ENCODE measurements at regions of chr17 and their contacts with region 1.

Region 1: DNA sequence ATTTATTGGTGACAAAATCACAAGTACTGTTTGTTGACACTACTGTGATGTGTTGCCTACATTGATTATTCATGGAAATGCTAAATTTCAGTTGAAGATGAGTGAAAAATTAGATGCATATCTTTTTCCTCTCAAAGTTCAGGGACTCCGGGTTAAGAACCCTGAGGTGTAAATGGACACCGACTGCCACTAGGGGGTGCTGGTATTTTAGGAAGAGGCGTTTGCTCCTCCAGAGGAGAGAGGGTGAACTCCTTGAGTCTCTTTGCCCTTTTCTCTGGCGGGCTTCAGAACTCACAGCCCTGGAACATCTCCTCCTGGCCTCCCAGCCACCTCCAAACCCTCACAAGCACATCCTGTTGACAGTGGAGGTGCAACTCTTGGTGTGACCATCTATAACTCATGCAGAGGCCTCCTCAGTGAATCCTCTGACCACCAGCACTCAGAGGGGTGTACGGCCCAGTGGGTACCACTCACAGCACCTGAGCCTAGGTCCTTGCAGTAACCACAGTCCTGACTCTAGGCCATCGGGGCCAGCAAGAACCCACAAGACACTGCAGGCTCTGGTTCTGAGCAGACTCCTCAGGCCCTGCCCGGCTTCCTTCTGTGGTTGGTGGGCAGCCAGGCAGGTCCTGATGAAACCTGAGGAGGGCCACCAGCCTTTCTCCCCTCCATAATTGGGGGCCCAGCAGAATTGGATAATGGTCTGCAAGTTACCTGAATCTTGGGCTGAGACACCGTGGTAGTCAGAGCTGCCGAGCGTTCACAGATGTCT is 26.2 kb upstream of the PIK3R5 start:
- DNase-seq: peak; percentile 63
- H3K4me3 ChIP-seq: no peak overlapping the region
- H3K27ac ChIP-seq: no peak overlapping the region
- H3K4me1 ChIP-seq: no peaks in the 10 kb centered on the region
- CTCF ChIP-seq: peak; percentile 85

Region 2: DNA sequence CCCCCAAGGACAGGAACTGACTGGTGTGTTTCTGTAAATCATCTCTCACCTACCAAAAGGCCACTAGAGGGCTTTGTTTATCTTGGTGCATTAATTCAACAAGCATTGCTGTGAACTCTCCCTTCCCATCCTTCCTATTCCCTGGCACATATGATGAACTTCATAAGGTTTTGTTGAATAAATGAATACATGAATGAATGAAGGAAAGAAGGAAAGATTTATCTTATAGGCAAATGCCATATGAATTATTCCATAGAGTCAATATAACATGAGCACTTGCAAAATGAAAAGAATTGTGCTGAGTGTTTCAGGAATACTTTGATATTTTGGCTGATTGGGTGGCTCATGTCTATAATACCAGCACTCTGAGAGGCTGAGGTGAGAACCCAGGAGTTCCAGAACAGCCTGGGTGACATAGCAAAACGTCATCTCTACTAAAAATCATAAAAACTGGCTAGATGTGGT is 237.7 kb before region 1 on chr17:
- CTCF ChIA-PET with region 1: no interaction called
- POLR2A ChIA-PET with region 1: no interaction called
- intact Hi-C with region 1: loop called (anchors 10 kb)
- DNase-seq: peak; percentile 44
- H3K4me3 ChIP-seq: no peak overlapping the region
- H3K27ac ChIP-seq: no peak overlapping the region
- H3K4me1 ChIP-seq: no peaks in the 10 kb centered on the region
- CTCF ChIP-seq: peak; percentile 80

Region 3: GRCh38 chr17:8976638-8977037 is 15.1 kb before region 1 on chr17:
- CTCF ChIA-PET with region 1: no interaction called
- POLR2A ChIA-PET with region 1: no interaction called
- intact Hi-C with region 1: no loop called
- DNase-seq: no peak
- H3K4me3 ChIP-seq: no peak overlapping the region
- H3K27ac ChIP-seq: no peak overlapping the region
- H3K4me1 ChIP-seq: no peaks in the 10 kb centered on the region
- CTCF ChIP-seq: no peak

Region 4: DNA sequence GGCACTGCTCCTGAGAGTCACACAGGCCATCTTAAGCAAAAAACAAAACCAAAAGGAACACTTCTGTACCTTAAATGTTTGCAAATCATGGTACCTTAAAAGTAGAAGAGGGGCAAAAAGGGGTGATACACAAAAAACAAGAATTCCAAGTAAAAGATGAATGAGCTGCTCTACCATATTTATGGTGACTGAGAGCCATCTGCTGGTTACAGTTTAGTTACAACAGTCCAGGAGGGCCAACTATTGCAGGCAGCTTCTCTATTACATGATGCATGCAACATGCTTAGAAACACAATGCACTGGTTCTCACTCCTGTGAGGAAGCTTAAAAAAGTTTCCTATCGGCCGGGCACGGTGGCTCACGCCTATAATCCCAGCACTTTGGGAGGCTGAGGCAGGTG is 530.4 kb after region 1 on chr17:
- CTCF ChIA-PET with region 1: no interaction called
- POLR2A ChIA-PET with region 1: no interaction called
- intact Hi-C with region 1: loop called (anchors 10 kb)
- DNase-seq: peak; percentile 24
- H3K4me3 ChIP-seq: no peak overlapping the region
- H3K27ac ChIP-seq: no peak overlapping the region
- H3K4me1 ChIP-seq: no peaks in the 10 kb centered on the region
- CTCF ChIP-seq: peak; percentile 52

Region 5: GRCh38 chr17:9557161-9557755 is 565.6 kb after region 1 on chr17:
- CTCF ChIA-PET with region 1: no interaction called
- POLR2A ChIA-PET with region 1: no interaction called
- intact Hi-C with region 1: loop called (anchors 10 kb)
- DNase-seq: no peak
- H3K4me3 ChIP-seq: no peak overlapping the region
- H3K27ac ChIP-seq: no peak overlapping the region
- H3K4me1 ChIP-seq: no peaks in the 10 kb centered on the region
- CTCF ChIP-seq: no peak